ENCODE measurements at regions of chr7 and their contacts with region 1.

Region 1: GRCh38 chr7:151736403-151736909 is 140.5 kb downstream of the PRKAG2 start:
- DNase-seq: peak; percentile 78
- H3K4me3 ChIP-seq: peak overlapping the region in 2 of 3 experiments; percentile 1 to 4
- H3K27ac ChIP-seq: no peak overlapping the region
- H3K4me1 ChIP-seq: peaks cover 16% of the 10 kb centered on the region
- H3K27me3 ChIP-seq: no peaks in the 10 kb centered on the region
- CTCF ChIP-seq: peak in 1 of 2 donors; percentile 21

Region 2: DNA sequence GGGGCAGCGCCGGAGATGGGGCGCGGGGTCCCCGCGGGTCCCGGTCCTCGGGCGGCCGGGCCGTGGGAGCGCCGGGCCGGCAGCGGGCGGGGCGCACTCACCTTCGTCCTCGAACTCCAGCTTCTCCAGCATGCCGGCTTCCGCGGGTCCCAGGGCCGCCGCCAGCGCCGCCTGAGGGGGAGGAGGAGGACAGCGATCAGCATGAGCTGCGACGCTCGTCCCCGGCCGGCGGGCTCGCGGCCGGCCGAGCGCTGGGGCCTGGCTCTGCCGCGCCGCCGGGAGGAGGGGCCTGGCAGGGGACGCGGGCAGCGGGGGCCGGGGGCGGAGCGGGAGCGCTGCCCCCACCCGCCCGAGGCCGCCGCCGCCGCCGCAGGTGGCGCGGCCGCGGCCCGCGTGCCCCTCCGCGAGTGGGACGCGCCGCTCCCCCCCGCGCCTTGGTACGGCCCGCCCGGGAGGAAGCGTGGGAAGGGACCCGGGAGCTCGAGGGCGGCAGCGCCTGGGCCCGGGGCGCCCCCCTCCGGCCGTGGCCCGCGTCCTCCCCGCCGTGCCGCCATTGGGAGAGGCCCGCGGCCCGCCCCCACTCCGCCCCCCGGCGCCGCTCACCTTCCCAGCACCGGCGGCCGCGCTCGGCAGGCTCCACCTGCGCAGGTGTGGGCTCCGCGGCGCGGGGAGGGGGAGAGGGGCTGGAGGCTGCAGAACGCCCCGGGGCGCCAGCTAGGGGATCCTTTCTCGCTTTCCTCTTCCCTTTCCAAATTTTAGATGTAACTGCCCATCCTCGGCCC is 104.3 kb before region 1 on chr7:
- CTCF ChIA-PET with region 1: no interaction called
- dilution Hi-C with region 1: no loop called
- in situ Hi-C with region 1: no loop called
- intact Hi-C with region 1: loop called (anchors 5 kb)
- DNase-seq: peak; percentile 78
- H3K4me3 ChIP-seq: peak overlapping the region; percentile 79 to 92 (median 87)
- H3K27ac ChIP-seq: peak overlapping the region; percentile 61
- H3K4me1 ChIP-seq: peaks cover 26% of the 10 kb centered on the region
- H3K27me3 ChIP-seq: no peaks in the 10 kb centered on the region
- CTCF ChIP-seq: peak; percentile 15 to 16

Measured in mammary epithelial cell (primary cell).